Cardiac septum (tissue), 1 donor: ENCODE measurements at regions of chr10 and their contacts with region 1.

Region 1: DNA sequence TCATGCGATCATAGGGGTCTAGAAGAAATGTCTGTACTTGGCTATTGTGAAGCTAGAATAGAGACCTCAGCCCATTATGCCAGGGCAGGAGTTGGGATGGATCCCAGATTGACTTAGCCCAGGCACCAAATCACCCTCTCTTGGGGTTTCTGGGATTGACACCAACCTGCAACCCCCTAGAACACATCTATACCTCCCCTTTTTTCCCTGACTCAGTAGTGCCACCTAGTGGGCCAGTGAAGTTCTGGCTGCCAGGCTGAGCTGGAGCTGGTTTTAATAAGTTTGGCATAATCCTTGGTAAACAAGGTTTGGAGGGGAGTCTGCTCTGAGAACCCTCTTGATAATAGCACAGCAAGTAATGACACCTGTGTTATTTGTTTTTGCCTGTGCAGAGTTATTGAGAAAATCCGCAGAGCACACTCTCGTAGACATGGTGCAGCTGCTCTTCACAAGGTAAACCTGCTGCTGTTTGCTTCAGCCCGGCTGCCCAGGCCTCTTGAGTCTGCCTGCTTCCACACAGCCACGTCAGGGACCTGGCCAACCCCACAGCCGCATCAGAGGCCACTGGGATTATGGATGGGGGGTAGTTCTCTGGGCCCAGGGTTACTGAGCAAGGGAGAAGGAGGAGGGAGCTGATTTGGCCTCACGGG is 43.3 kb upstream of the NFKB2 start:
- DNase-seq: no peak

Region 2: DNA sequence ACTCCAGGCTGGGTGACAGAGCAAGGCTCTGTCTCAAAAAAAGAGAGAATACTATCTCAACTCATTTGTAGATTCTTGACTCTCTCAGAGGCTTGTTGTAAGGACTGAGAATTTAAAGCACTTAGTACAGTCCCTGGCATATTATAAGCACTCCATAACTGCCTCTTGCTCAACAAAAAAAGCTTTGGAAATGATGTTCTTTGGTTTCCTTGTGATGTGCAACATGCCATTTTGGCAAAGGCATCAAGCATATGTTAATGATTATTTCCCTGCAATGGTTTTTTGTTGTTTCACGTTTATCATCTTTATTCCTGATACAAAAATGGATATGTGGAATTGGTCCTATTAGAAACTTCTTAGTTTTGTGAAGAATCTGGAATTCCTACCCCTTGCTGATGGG is 184.3 kb before region 1 on chr10:
- intact Hi-C with region 1: loop called (anchors 2 kb)
- DNase-seq: no peak

Region 3: GRCh38 chr10:102835007-102835482 is 482.9 kb after region 1 on chr10:
- intact Hi-C with region 1: no loop called
- DNase-seq: peak; percentile 86